GM12878 (cell line): ENCODE measurements at regions of chr7 and their contacts with region 1.

Region 1: DNA sequence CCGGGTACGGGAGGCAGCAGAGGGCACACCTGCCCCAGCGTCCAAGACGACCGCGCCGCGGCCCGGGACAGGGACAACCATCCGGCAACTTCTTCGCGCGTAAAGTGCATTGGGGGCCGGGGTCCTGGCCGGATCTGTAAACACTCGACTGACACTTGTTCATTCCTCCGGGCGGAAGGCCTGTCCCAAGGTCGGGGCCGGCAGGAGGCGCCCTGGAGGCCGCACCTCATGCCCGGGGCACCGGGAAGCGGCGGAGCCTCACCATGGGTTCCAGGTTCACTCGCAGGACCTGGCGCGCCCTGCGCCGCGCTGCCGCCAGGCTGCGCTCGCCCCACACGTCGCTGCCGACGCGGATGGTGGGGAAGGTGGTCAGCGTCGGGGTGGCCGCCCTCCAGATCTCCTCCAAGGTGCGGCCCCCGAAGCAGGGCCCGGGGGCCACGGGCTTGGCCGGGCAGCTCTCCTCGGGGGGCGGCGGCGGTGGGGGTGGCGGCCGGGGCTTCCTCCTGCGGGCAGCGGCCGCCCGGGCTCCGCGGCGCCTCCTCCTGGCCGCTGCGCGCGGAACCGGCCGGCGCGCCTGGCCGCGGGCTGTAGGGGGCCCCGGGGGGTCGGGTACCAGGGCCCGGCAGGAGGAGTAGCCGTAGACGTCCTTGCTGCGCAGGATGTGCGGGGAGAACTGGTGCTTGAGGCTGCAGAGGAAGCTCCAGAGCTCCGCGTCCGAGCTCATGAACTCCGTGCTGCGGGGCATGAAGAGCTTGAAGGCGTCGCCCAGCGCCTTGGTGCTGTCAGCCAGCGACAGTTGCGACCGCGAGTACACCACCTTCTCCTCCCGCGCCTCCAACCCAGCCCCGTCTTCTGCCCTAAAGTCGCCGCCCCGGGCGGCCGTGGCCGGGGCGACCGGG is 746 bp downstream of the CCDC71L start:
- DNase-seq: peak; percentile 51
- ATAC-seq: peak; percentile 79
- H3K4me3 ChIP-seq: peak overlapping the region; percentile 96
- H3K27ac ChIP-seq: peak overlapping the region; percentile 72
- H3K4me1 ChIP-seq: peaks cover 9% of the 10 kb centered on the region; the same call in 1 of the 2 replicates
- H3K27me3 ChIP-seq: no peaks in the 10 kb centered on the region; a peak in 1 of 4 replicates
- CTCF ChIP-seq: peak; percentile 78 to 94 (median 89)
- EP300 ChIP-seq: 0 out of 4 replicates have a peak, but pooled peaks of 1 of the 2 experiments have one; percentile 37
- POLR2A ChIP-seq: peak; percentile 78
- RAD21 ChIP-seq: peak; percentile 76

Region 2: GRCh38 chr7:106542550-106543220 is 117.5 kb before region 1 on chr7:
- CTCF ChIA-PET with region 1: interaction called, 171 read pairs
- POLR2A ChIA-PET with region 1: interaction called, 3 read pairs
- RAD21 ChIA-PET with region 1: interaction called, 89 read pairs
- SMC1A ChIA-PET with region 1: interaction called, 86 read pairs
- in situ Hi-C with region 1: loop called (anchors 5 kb)
- intact Hi-C with region 1: loop called (anchors 1 kb)
- DNase-seq: peak; percentile 57
- ATAC-seq: peak; percentile 95
- H3K4me3 ChIP-seq: no peak overlapping the region
- H3K27ac ChIP-seq: no peak overlapping the region
- H3K4me1 ChIP-seq: no peaks in the 10 kb centered on the region; the same call in 1 of the 2 replicates
- H3K27me3 ChIP-seq: no peaks in the 10 kb centered on the region
- CTCF ChIP-seq: peak; percentile 70 to 77 (median 74)
- EP300 ChIP-seq: no peak
- POLR2A ChIP-seq: no peak
- RAD21 ChIP-seq: peak; percentile 94

Region 3: GRCh38 chr7:106598663-106599342 is 61.4 kb before region 1 on chr7:
- CTCF ChIA-PET with region 1: interaction called, 19 read pairs
- POLR2A ChIA-PET with region 1: no interaction called
- RAD21 ChIA-PET with region 1: interaction called, 11 read pairs
- SMC1A ChIA-PET with region 1: interaction called, 11 read pairs
- in situ Hi-C with region 1: no loop called
- intact Hi-C with region 1: no loop called
- DNase-seq: peak; percentile 71
- ATAC-seq: peak; percentile 99
- H3K4me3 ChIP-seq: no peak overlapping the region
- H3K27ac ChIP-seq: no peak overlapping the region
- H3K4me1 ChIP-seq: no peaks in the 10 kb centered on the region
- H3K27me3 ChIP-seq: no peaks in the 10 kb centered on the region; a peak in 1 of 4 replicates
- CTCF ChIP-seq: no peak
- EP300 ChIP-seq: no peak
- POLR2A ChIP-seq: no peak
- RAD21 ChIP-seq: no peak

Region 4: GRCh38 chr7:106644999-106645398 is 15.2 kb before region 1 on chr7:
- CTCF ChIA-PET with region 1: interaction called, 16 read pairs
- POLR2A ChIA-PET with region 1: no interaction called
- RAD21 ChIA-PET with region 1: interaction called, 3 read pairs
- SMC1A ChIA-PET with region 1: interaction called, 8 read pairs
- in situ Hi-C with region 1: no loop called
- intact Hi-C with region 1: no loop called
- DNase-seq: no peak
- ATAC-seq: peak; percentile 89
- H3K4me3 ChIP-seq: no peak overlapping the region
- H3K27ac ChIP-seq: no peak overlapping the region
- H3K4me1 ChIP-seq: no peaks in the 10 kb centered on the region
- H3K27me3 ChIP-seq: no peaks in the 10 kb centered on the region
- CTCF ChIP-seq: no peak
- EP300 ChIP-seq: no peak
- POLR2A ChIP-seq: no peak
- RAD21 ChIP-seq: no peak

Region 5: GRCh38 chr7:106731187-106731586 is 71.0 kb after region 1 on chr7:
- CTCF ChIA-PET with region 1: interaction called, 151 read pairs
- POLR2A ChIA-PET with region 1: interaction called, 11 read pairs
- RAD21 ChIA-PET with region 1: interaction called, 67 read pairs
- SMC1A ChIA-PET with region 1: interaction called, 115 read pairs
- in situ Hi-C with region 1: loop called (anchors 5 kb)
- intact Hi-C with region 1: loop called (anchors 1 kb)
- DNase-seq: peak; percentile 91
- ATAC-seq: peak; percentile 95
- H3K4me3 ChIP-seq: no peak overlapping the region
- H3K27ac ChIP-seq: peak overlapping the region; percentile 40; the same call in 1 of the 2 replicates
- H3K4me1 ChIP-seq: peaks cover 17% of the 10 kb centered on the region
- H3K27me3 ChIP-seq: no peaks in the 10 kb centered on the region
- CTCF ChIP-seq: no peak
- EP300 ChIP-seq: peak in 1 of 2 experiments; percentile 80; a peak in 2 of 4 replicates
- POLR2A ChIP-seq: no peak
- RAD21 ChIP-seq: 0 out of 2 replicates have a peak, but pooled peaks have one; percentile 7

Region 6: DNA sequence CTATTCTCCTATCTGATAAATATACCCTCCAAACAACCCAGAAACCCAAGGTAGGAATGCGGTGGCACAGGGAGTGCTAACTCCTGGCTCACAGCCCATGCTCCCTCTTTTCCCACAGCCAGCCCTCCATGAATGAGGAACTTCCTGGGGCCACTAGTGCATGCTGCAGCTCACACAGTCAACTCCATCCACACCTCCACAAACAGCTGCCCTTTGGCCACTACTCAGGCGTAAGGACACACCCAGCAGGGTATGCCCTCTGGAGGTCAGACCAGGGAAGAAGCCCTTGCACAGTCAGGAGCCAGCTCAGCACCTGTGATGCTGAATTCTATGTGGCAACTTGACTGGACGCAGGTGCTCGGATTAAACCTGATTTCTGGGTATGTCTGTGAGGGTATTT is 119.7 kb after region 1 on chr7:
- CTCF ChIA-PET with region 1: interaction called, 9 read pairs
- POLR2A ChIA-PET with region 1: no interaction called
- RAD21 ChIA-PET with region 1: interaction called, 3 read pairs
- SMC1A ChIA-PET with region 1: interaction called, 5 read pairs
- in situ Hi-C with region 1: no loop called
- intact Hi-C with region 1: loop called (anchors 5 kb)
- DNase-seq: no peak
- ATAC-seq: peak; percentile 92
- H3K4me3 ChIP-seq: no peak overlapping the region
- H3K27ac ChIP-seq: no peak overlapping the region
- H3K4me1 ChIP-seq: no peaks in the 10 kb centered on the region
- H3K27me3 ChIP-seq: peaks cover 0 to 2% of the 10 kb centered on the region in 2 experiments; a peak in 1 of 4 replicates
- CTCF ChIP-seq: peak; percentile 31 to 44 (median 31); a peak in 5 of 6 replicates
- EP300 ChIP-seq: no peak
- POLR2A ChIP-seq: no peak
- RAD21 ChIP-seq: peak; percentile 41